ENCODE measurements at regions of chr10 and their contacts with region 1.

Region 1: DNA sequence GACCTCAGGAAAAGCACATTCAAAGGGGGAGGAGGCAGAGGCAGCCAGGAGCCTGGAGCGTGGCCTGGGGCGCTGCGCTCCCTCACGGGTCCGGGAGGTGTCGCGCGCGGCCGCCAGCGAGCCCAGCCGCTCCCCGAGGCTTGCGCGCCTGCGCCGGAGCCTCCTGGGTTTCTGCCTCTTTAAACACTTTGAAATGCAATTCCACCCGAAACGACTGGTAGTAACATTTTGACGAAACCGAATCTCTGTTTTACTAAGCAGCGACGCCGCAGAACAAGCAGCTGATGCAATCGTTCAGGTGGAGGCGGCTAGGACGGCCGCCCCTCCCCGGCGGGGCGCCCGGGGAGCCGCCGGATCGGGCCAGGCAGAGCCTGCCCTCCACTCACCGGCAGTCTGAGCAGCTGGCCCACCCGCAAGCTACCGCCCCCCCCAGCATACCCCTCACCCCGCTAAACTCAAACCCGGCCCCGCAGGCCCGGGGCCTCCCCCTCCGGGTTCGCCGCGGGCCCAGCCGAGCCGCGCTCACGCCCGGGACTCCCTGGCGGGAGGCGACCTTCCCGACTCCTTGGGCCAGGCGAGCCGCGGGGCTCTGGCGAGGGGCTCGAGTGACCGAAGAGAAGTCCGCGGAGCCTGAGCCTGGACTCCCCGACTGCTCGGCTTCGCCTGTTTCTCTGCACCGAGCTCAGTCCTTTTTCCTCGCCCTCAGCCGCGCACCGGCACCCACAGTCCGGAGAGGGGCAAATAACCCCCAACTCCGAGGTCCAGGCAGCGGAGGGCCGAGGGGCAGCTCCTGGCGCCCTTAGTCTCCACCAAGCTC is 3.2 kb downstream of the MKX start:
- DNase-seq: peak; percentile 85
- ATAC-seq: peak; percentile 91 to 94

Region 2: GRCh38 chr10:28179006-28179742 is 436.8 kb after region 1 on chr10:
- intact Hi-C with region 1: loop called in 1 of 2 experiments (anchors 5 kb)
- DNase-seq: no peak
- ATAC-seq: peak; percentile 53 to 81

Region 3: DNA sequence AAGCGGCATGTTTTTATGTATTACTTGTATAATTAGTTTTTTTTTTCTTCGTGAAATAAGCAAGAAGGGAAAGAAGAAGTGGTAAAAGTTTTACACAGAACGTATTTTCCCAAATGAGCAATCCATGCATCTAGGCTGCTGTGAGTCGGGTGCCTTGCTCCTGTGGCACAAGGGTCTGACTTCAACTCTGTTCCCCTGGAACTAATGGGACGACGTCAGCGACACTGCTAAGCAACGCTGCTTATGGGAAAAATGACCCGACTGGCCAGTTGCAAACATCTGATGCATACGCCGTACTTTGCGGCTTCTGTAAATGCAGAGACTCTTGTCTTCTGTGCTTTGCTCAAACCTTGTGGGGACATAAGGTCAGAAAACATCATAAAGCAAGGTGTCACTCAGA is 494.2 kb after region 1 on chr10:
- intact Hi-C with region 1: loop called in 1 of 2 experiments (anchors 5 kb)
- DNase-seq: no peak
- ATAC-seq: no peak

Region 4: GRCh38 chr10:28812384-28813372 is 1070.3 kb after region 1 on chr10:
- intact Hi-C with region 1: no loop called
- DNase-seq: no peak
- ATAC-seq: no peak